Aorta (tissue), 5 donors: ENCODE measurements at regions of chr2 and their contacts with region 1.

Region 1: DNA sequence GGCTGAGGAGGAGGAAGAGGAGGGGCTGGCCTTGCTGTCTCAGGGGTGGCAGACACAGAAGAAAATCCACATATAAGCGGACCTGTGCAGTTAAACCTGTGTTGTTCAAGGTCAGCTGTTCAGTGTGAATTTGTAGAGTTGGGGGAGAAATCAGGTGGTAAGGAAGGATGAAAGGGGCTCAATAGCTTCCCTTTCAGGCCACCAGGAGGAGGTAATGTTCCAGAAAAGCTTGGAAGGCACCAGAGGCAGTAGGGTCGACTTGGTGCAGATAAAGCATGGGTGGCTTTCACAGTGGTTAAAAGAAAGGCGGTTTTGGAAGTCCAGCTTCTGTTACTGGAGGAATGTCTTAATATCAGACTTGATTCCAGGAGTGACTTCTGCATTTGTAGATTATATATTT is 167.4 kb downstream of the THSD7B start:
- DNase-seq: no peak
- ATAC-seq: no peak
- H3K4me3 ChIP-seq: no peak overlapping the region
- H3K27ac ChIP-seq: no peak overlapping the region
- H3K4me1 ChIP-seq: no peaks in the 10 kb centered on the region
- H3K27me3 ChIP-seq: no peaks in the 10 kb centered on the region

Region 2: DNA sequence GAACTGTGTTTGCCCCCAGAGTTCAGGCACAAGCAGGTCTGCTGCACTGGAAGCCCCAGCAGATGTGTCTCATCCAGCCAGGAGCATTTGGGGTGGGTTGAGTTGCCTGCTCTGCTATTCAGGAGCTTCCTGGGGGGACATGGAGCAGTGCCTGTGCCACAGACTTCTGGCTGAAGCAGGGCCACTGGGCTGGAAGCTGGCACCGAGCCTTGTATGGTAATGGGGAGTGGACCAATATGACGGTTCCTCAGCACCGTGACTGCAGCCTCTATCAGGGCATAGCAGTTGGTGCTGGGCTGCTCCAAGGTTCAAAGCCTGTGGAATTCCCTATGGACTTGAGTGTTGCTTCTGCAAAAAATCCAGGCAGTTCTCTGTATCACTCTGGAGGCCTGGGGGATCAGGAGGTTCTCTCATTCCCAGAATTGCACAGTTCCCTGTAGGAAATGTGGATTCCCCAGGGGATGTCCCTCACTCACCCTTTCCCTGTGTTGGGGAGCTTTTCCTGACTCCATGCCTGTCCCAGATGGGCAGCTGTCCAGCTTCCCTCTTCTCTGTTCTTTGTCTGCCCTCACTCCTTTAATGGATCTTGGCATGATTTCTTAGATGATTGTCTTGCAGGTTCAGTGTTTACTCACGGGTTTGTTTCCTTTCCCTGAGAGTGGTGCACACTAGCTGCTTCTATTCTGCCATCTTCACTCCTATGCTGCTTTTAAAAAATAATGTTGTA is 204.6 kb before region 1 on chr2:
- intact Hi-C with region 1: no loop called
- DNase-seq: no peak
- ATAC-seq: no peak
- H3K4me3 ChIP-seq: no peak overlapping the region
- H3K27ac ChIP-seq: no peak overlapping the region
- H3K4me1 ChIP-seq: no peaks in the 10 kb centered on the region
- H3K27me3 ChIP-seq: no peaks in the 10 kb centered on the region

Region 3: GRCh38 chr2:137847443-137847842 is 914.7 kb after region 1 on chr2:
- intact Hi-C with region 1: loop called in 1 of 2 experiments (anchors 10 kb)
- DNase-seq: no peak
- ATAC-seq: no peak
- H3K4me3 ChIP-seq: no peak overlapping the region
- H3K27ac ChIP-seq: no peak overlapping the region
- H3K4me1 ChIP-seq: no peaks in the 10 kb centered on the region
- H3K27me3 ChIP-seq: peaks cover 0 to 2% of the 10 kb centered on the region in 2 donors